ENCODE measurements at regions of chr18 and their contacts with region 1.

Region 1: GRCh38 chr18:51051105-51051712 is 21.2 kb downstream of the SMAD4 start:
- DNase-seq: peak in 1 of 2 experiments; percentile 31
- H3K4me3 ChIP-seq: no peak overlapping the region
- H3K4me3 Mint-ChIP-seq: no peak overlapping the region
- H3K27ac Mint-ChIP-seq: no peak overlapping the region
- H3K4me1 ChIP-seq: no peaks in the 10 kb centered on the region
- H3K4me1 Mint-ChIP-seq: no peaks in the 10 kb centered on the region
- H3K27me3 ChIP-seq: no peaks in the 10 kb centered on the region
- H3K27me3 Mint-ChIP-seq: no peaks in the 10 kb centered on the region
- CTCF ChIP-seq: peak; percentile 48 to 50

Region 2: DNA sequence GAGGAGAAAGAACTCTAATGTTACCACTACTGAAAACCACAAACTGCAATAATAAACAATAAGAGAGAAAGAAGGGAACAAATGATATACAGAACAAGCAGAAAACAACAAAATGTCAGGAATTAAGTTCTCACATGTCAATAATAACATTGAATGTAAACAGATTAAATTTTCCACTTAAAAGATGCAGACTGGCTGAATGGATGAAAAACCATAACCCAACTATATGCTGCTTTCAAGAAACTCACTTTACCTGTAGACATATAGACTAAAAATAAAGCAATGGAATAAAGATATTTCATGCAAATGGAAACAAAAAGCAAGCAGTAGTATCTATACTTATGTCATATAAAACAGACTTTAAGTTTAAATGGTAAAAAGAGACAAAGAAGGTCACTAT is 281.7 kb before region 1 on chr18:
- CTCF ChIA-PET with region 1: no interaction called
- POLR2A ChIA-PET with region 1: no interaction called
- intact Hi-C with region 1: no loop called
- DNase-seq: no peak
- H3K4me3 ChIP-seq: no peak overlapping the region
- H3K4me3 Mint-ChIP-seq: no peak overlapping the region
- H3K27ac Mint-ChIP-seq: no peak overlapping the region
- H3K4me1 ChIP-seq: no peaks in the 10 kb centered on the region
- H3K4me1 Mint-ChIP-seq: no peaks in the 10 kb centered on the region
- H3K27me3 ChIP-seq: no peaks in the 10 kb centered on the region
- H3K27me3 Mint-ChIP-seq: no peaks in the 10 kb centered on the region
- CTCF ChIP-seq: no peak

Region 3: GRCh38 chr18:50819728-50820378 is 231.4 kb before region 1 on chr18 and contains the start of gene MRO:
- CTCF ChIA-PET with region 1: no interaction called
- POLR2A ChIA-PET with region 1: no interaction called
- intact Hi-C with region 1: loop called (anchors 1 kb)
- DNase-seq: peak; percentile 63 to 77
- H3K4me3 ChIP-seq: peak within 1 kb of the TSS; percentile 33
- H3K4me3 Mint-ChIP-seq: no peak within 1 kb of the TSS
- H3K27ac Mint-ChIP-seq: no peak within 1 kb of the TSS
- H3K4me1 ChIP-seq: no peaks in the 10 kb centered on the region
- H3K4me1 Mint-ChIP-seq: no peaks in the 10 kb centered on the region
- H3K27me3 ChIP-seq: no peaks in the 10 kb centered on the region
- H3K27me3 Mint-ChIP-seq: peaks cover 3% of the 10 kb centered on the region
- CTCF ChIP-seq: peak; percentile 56 to 84
- total RNA-seq, gene MRO: 0.21 TPM in 1 of 2 replicates, not detected in the other

Region 4: GRCh38 chr18:50967714-50968661 is 83.2 kb before region 1 on chr18 and contains the start of gene ELAC1:
- CTCF ChIA-PET with region 1: no interaction called
- POLR2A ChIA-PET with region 1: no interaction called
- intact Hi-C with region 1: loop called (anchors 2 kb)
- DNase-seq: peak; percentile 54 to 73
- H3K4me3 ChIP-seq: peak within 1 kb of the TSS; percentile 67
- H3K4me3 Mint-ChIP-seq: peak within 1 kb of the TSS; percentile 72
- H3K27ac Mint-ChIP-seq: no peak within 1 kb of the TSS
- H3K4me1 ChIP-seq: no peaks in the 10 kb centered on the region
- H3K4me1 Mint-ChIP-seq: peaks cover 8% of the 10 kb centered on the region
- H3K27me3 ChIP-seq: no peaks in the 10 kb centered on the region
- H3K27me3 Mint-ChIP-seq: no peaks in the 10 kb centered on the region
- CTCF ChIP-seq: no peak
- total RNA-seq, gene ELAC1: 4.8 and 5.3 TPM in 2 replicates

Region 5: GRCh38 chr18:51016903-51017879 is 34.0 kb before region 1 on chr18:
- CTCF ChIA-PET with region 1: no interaction called
- POLR2A ChIA-PET with region 1: no interaction called
- intact Hi-C with region 1: no loop called
- DNase-seq: no peak
- H3K4me3 ChIP-seq: no peak overlapping the region
- H3K4me3 Mint-ChIP-seq: no peak overlapping the region
- H3K27ac Mint-ChIP-seq: no peak overlapping the region
- H3K4me1 ChIP-seq: no peaks in the 10 kb centered on the region
- H3K4me1 Mint-ChIP-seq: no peaks in the 10 kb centered on the region
- H3K27me3 ChIP-seq: no peaks in the 10 kb centered on the region
- H3K27me3 Mint-ChIP-seq: no peaks in the 10 kb centered on the region
- CTCF ChIP-seq: no peak

Region 6: GRCh38 chr18:51029694-51030536 is 21.3 kb before region 1 on chr18 and contains the start of gene SMAD4:
- CTCF ChIA-PET with region 1: no interaction called
- POLR2A ChIA-PET with region 1: no interaction called
- intact Hi-C with region 1: loop called (anchors 1 kb)
- DNase-seq: peak; percentile 93 to 94
- H3K4me3 ChIP-seq: peak within 1 kb of the TSS; percentile 70
- H3K4me3 Mint-ChIP-seq: peak within 1 kb of the TSS; percentile 94
- H3K27ac Mint-ChIP-seq: peak within 1 kb of the TSS; percentile 94
- H3K4me1 ChIP-seq: no peaks in the 10 kb centered on the region
- H3K4me1 Mint-ChIP-seq: peaks cover 7% of the 10 kb centered on the region
- H3K27me3 ChIP-seq: no peaks in the 10 kb centered on the region
- H3K27me3 Mint-ChIP-seq: no peaks in the 10 kb centered on the region
- CTCF ChIP-seq: no peak
- total RNA-seq, gene SMAD4: 48.5 and 48.8 TPM in 2 replicates

Region 7: DNA sequence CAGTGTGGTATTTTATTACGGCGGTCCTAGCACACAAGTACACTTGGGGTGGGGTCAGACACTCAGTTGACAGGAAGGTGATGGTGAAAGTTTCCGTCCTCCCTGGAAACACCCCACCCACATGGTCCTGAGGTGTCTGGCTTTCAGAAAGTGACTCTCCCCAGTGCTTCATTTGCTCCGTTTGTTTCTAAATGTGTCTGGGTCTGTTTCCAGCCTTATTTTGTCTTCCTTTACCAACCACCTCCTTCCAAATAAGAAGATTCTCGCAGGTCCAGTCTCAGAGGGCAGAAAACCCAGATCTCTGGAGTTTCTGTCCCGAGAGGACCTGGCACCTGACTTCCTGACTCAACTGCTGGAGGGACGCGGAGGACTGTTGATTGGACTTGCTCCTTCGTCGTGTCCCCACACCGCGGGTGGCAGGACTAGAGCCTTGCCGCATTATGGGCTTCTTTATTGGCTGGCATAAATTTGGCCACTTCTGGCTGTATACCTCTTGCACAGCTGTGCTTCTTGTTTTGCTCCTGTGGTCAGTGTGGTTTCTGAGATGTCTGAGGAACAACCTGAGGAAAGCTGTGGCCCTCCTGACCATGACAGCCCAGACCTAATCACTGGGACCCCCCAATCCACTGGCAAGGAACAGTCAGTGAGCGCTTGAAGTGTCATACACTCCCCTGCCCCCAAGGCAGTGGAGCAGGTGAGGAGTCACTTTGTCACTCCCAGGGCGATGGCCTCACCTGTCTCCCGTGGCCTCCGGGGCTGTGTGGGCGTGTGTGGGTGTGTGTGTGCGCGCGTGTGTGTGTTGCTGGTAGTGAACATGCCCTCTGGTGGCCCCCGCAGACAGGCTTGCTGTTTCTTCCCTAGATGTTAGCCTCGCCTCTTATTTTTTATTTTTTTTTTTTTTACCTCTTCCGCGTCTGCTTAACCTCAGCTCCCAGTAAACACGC is 100.6 kb after region 1 on chr18:
- CTCF ChIA-PET with region 1: no interaction called
- POLR2A ChIA-PET with region 1: interaction called, 10 read pairs
- intact Hi-C with region 1: no loop called
- DNase-seq: peak in 1 of 2 experiments; percentile 2
- H3K4me3 ChIP-seq: no peak overlapping the region
- H3K4me3 Mint-ChIP-seq: no peak overlapping the region
- H3K27ac Mint-ChIP-seq: no peak overlapping the region
- H3K4me1 ChIP-seq: peaks cover 15% of the 10 kb centered on the region
- H3K4me1 Mint-ChIP-seq: no peaks in the 10 kb centered on the region
- H3K27me3 ChIP-seq: no peaks in the 10 kb centered on the region
- H3K27me3 Mint-ChIP-seq: no peaks in the 10 kb centered on the region
- CTCF ChIP-seq: no peak